AG04450 (cell line): ENCODE measurements at regions of chr12 and their contacts with region 1.

Region 1: DNA sequence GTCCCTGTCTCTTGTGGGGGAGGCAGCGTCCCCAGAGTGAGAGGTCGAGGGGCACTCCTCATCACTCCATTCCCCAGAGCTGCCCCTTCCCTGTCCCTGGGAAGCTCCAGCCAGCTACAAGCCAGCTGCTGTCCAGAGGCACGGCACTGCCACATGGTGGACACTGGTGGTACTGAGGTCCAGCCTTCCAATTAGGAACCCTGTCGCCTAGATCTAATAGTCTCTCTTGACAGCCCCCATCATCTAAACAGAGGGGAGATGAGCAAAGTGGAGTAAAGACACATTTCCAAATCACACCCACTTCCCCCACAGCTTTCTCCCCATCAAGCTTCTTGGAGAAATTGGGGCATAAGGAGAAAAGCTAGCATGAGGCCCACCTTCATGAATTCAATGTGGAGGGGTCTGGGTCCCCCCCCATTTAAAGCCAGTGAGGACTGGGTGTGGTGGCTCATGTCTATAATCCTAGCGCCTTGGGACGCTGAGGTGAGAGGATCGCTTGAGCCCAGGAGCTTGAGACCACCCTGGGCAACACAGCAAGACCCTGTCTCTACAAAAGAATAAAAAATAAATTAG is 2.1 kb upstream of the INHBE start:
- DNase-seq: no peak
- H3K4me3 ChIP-seq: no peak overlapping the region
- H3K27ac ChIP-seq: peak overlapping the region; percentile 98
- H3K27me3 ChIP-seq: no peaks in the 10 kb centered on the region
- CTCF ChIP-seq: peak; percentile 98

Region 2: DNA sequence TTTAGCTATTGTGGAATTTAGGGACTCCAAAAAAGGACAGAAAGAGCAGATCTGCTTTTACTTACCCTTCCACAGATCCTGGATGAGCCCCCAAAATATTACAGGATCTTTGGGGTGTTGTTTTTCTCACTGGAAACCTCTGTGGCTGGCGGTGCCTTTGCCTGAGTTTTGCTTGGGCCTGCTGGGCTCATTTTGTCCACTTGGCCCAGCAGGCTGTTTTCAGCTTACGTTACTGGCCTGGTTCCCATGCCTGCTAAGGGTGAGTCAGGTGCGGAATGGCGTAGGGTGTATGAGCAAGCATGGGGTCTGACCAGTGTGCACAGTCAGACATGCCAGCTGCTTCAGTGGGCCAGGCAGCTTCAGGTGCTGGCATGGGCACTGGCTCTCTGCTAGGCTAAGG is 644.1 kb before region 1 on chr12:
- CTCF ChIA-PET with region 1: no interaction called
- POLR2A ChIA-PET with region 1: no interaction called
- DNase-seq: no peak
- H3K4me3 ChIP-seq: no peak overlapping the region
- H3K27ac ChIP-seq: no peak overlapping the region
- H3K27me3 ChIP-seq: no peaks in the 10 kb centered on the region
- CTCF ChIP-seq: no peak

Region 3: DNA sequence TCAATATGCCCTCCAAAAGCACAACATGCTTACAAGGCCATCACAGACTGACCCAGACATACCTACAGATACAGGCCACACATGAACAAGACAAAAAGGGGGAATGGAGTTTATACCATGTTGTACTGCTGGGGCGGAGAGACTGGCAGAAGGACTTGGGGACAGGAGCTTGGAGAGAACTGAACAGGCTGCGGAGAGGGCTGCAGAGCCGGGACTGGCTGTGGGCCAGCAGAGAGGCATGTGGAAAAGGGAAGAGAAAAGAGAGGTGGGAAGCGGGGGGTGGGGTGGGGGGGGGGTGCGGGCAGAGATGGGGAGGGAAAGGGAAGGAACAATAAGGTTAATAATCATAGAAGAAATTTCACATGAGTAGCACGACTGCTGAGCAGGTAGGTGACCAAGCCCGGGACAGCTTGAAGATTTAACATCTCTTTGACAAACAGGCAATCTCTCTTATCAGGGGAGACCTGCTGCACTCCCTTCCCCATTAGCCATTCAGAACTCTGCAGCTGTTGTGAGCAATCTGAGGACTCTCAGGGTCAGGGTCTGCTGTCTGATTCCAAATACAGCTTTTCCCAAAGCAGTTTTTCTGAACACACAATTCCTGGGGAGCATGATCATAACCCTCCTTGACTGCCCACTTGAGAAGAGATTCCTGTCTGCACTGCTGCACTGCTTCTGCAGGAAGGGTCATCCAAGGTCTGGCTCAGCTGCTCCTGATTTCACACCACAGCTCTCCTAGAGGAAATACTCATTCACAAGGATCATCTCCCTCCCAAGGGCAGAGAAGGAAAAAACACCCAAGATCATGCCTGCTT is 180.5 kb before region 1 on chr12:
- CTCF ChIA-PET with region 1: interaction called, 21 read pairs
- POLR2A ChIA-PET with region 1: no interaction called
- DNase-seq: no peak
- H3K4me3 ChIP-seq: no peak overlapping the region
- H3K27ac ChIP-seq: peak overlapping the region; percentile 47
- H3K27me3 ChIP-seq: no peaks in the 10 kb centered on the region
- CTCF ChIP-seq: no peak

Region 4: GRCh38 chr12:57309420-57309819 is 143.6 kb before region 1 on chr12:
- CTCF ChIA-PET with region 1: interaction called, 294 read pairs
- POLR2A ChIA-PET with region 1: interaction called, 10 read pairs
- DNase-seq: no peak
- H3K4me3 ChIP-seq: no peak overlapping the region
- H3K27ac ChIP-seq: no peak overlapping the region
- H3K27me3 ChIP-seq: no peaks in the 10 kb centered on the region
- CTCF ChIP-seq: no peak

Region 5: DNA sequence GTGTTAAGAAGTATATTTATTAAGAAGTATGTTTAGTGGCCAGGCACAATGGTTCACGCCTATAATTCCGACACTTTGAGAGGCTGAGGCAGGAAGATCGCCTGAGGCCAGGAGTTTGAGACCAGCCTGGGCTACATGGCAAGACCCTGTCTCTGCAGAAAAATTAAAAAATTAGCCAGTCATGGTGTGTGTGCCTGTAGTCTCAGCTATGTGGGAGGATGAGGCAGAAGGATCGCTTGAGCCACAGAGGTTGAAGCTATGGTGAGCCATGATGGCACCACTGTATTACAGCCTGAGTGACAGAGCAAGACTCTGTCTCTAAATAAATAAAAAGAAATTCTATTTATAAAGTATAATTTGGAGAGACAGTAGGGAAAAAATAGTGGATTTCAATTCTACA is 42.5 kb before region 1 on chr12:
- CTCF ChIA-PET with region 1: interaction called, 14 read pairs
- POLR2A ChIA-PET with region 1: no interaction called
- DNase-seq: no peak
- H3K4me3 ChIP-seq: no peak overlapping the region
- H3K27ac ChIP-seq: no peak overlapping the region
- H3K27me3 ChIP-seq: no peaks in the 10 kb centered on the region
- CTCF ChIP-seq: no peak